Esophagus muscularis mucosa (tissue), 4 donors: ENCODE measurements at regions of chr2 and their contacts with region 1.

Region 1: GRCh38 chr2:7044261-7045250 is 127.3 kb downstream of the RNF144A start:
- DNase-seq: no peak
- H3K4me3 ChIP-seq: no peak overlapping the region
- H3K27ac ChIP-seq: no peak overlapping the region
- H3K4me1 ChIP-seq: peaks cover 0 to 13% (median 8%) of the 10 kb centered on the region in 4 donors
- H3K27me3 ChIP-seq: no peaks in the 10 kb centered on the region
- CTCF ChIP-seq: peak; percentile 79 to 97 (median 89)
- EP300 ChIP-seq: no peak
- POLR2A ChIP-seq: no peak

Region 2: DNA sequence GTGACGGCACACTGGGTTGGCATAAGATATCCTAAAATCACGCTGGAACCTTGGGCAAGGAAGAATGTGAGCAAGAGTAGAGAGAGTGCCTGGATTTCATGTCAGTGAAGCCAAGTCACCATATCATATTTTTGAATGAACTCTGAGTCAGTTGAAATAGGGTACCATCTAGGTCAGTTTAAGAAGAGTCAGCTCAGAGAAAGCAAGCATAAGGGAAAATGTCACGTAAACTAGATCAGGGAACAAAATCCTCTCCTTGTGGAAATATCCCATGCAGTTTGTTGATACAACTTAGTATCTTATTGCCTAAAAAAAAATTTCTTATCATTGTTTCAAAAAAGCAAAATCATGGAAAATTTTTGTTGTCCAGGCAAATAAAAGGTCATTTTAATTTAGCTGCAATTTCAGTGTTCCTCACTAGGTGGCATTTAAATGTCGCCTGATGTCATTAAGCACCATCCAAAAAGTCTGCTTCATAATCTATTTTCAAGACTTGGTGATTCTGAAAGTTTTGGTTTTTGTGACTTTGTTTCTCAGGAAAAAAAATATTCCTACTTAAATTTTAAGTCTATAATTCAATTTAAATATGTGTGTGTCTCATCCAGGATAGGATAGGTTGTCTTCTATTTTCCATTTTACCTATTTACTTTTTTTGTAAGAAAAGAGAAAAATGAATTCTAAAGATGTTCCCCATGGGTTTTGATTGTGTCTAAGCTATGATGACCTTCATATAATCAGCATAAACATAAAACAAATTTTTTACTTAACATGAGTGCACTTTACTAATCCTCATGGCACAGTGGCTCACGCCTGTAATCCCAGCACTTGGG is 147.4 kb before region 1 on chr2:
- intact Hi-C with region 1: loop called (anchors 2 kb)
- DNase-seq: no peak
- H3K4me3 ChIP-seq: no peak overlapping the region
- H3K27ac ChIP-seq: no peak overlapping the region
- H3K4me1 ChIP-seq: no peaks in the 10 kb centered on the region
- H3K27me3 ChIP-seq: no peaks in the 10 kb centered on the region
- CTCF ChIP-seq: peak; percentile 60 to 75 (median 60)
- EP300 ChIP-seq: no peak
- POLR2A ChIP-seq: no peak

Region 3: DNA sequence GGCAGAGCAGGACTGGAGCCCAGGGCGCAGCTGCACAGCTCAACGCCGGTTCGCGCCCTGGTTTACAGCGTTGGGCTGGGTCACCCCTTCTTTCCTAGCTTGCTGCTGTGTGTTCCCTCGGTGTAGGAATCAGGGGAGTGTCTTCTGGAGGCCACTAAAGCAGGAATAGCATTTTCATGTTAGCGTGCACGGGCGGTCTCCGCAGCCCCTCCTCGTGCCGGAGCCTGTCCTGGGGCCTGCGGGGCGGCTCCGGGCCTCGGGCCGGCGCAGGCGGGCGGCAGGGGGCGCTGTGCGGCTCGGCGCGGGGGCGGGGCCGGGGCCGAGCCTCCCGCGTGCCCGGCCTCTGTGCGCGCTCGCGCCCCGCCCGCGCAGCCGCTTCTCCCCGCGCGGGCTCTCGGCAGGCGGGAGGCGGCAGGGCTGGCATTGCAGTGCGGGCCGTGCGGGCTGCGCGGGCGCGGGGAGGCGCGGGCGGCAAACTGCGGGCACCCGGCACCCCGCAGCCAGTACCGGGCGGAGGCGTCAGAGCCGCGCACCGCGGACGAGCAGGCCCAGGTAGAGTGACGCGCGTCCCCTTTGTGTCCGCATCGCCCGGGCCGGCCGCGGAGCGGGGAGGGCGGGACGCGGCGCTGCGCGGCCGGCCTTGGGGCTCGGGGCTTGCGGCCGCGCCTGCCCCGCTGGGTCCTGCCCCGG is 127.3 kb before region 1 on chr2 and contains the start of gene RNF144A:
- intact Hi-C with region 1: loop called (anchors 5 kb)
- DNase-seq: no peak
- H3K4me3 ChIP-seq: peak within 1 kb of the TSS; percentile 74 to 90 (median 78)
- H3K27ac ChIP-seq: peak within 1 kb of the TSS; percentile 64 to 80 (median 70)
- H3K4me1 ChIP-seq: peaks cover 18 to 39% (median 29%) of the 10 kb centered on the region in 4 donors
- H3K27me3 ChIP-seq: no peaks in the 10 kb centered on the region
- CTCF ChIP-seq: peak; percentile 33 to 57 (median 50)
- EP300 ChIP-seq: no peak
- POLR2A ChIP-seq: no peak
- total RNA-seq, gene RNF144A: 5.4 to 10.8 (median 8.8) TPM

Region 4: GRCh38 chr2:7530001-7530400 is 485.4 kb after region 1 on chr2:
- intact Hi-C with region 1: no loop called
- DNase-seq: no peak
- H3K4me3 ChIP-seq: no peak overlapping the region
- H3K27ac ChIP-seq: no peak overlapping the region
- H3K4me1 ChIP-seq: no peaks in the 10 kb centered on the region
- H3K27me3 ChIP-seq: no peaks in the 10 kb centered on the region
- CTCF ChIP-seq: no peak
- EP300 ChIP-seq: no peak
- POLR2A ChIP-seq: no peak